Naive thymus-derived CD4-positive, alpha-beta T cell (primary cell): ENCODE measurements at regions of chr19 and their contacts with region 1.

Region 1: DNA sequence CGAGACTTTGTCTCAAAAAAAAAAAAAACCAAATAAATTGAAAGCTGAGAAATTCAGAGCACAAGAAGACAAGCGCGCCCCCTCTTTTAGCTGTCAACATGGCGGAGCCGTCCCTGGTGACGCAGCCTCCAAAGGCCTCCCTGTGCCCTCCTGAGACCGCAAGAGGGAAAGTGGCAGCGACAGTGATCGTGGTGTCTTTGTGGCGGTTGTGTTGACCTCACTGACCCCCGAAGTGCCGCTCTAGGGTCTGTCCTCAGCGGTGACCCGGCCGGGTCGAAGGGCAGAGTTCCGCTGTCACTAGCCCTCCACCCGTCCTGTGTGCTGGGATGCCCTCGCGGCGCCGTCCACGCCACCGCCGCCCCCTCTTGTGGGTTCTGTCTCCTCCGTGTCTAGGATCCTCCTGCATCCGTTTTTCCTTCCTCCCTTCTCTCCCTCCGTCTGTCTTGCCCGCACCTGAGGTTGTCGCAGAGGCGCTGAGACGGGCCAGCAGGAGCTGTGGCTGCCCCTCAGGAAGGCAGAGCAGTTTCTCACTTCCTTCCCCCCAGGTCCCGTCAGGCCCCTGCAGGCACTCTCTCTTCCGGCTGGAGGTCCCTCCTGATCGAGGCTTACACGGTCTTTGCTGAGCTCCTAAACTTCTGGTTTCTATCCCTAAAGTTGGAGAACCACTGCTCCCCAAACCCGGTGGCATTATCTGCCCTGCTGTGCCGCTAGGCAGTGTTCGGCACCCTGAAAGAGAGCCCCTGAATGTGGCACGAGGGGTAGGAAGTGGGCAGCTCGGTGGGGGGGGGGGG is 7.2 kb downstream of the UHRF1 start:
- DNase-seq: peak in 8 of 9 donors; percentile 34 to 66 (median 60)
- ATAC-seq: peak; percentile 47
- H3K4me3 ChIP-seq: peak overlapping the region; percentile 80
- H3K4me3 Mint-ChIP-seq: peak overlapping the region; percentile 96 to 100 (median 99)
- H3K27ac ChIP-seq: peak overlapping the region; percentile 93
- H3K27ac Mint-ChIP-seq: peak overlapping the region; percentile 97 to 100 (median 99)
- H3K4me1 ChIP-seq: peaks cover 29 to 34% of the 10 kb centered on the region in 2 donors
- H3K4me1 Mint-ChIP-seq: peaks cover 26 to 59% (median 39%) of the 10 kb centered on the region in 7 donors
- H3K27me3 ChIP-seq: no peaks in the 10 kb centered on the region
- H3K27me3 Mint-ChIP-seq: no peaks in the 10 kb centered on the region

Region 2: DNA sequence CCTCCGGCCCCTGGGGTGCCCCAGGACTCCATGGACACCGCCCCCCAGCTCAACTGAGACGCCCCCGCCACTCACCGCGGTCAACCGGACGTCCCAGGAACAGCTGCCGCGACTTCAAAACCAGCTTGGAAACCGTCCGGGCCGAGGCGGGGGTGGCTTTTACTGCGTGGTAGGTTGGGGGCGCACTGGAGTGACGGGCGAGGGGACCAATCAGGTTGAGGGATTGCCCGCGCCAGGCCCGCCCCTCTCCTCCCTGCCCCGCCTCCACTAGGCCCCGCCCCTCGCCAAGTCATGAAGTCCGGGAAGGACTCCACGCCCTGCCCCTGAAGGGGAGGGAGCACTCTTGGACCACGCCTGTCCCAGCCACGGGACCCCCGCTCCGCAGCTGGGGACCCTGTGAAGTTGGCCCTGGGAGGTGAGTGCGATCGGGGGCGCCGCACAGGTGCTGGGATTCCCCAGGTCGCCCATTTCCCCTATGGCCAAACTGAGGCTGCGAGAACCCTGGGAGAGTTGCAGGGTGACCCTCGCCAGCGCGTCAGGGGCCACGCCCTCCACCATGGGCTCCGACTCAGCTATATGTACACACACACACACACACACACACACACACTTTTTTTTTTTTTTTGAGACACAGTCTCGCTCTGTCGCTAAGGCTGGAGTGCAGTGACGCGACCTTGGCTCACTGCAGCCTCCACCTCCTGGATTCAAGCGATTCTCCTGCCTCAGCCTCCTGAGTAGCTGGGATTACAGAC is 48.8 kb before region 1 on chr19 and contains the start of gene PLIN3:
- CTCF ChIA-PET with region 1: interaction called, 51 read pairs
- POLR2A ChIA-PET with region 1: interaction called, 14 read pairs
- intact Hi-C with region 1: loop called (anchors 1 kb)
- DNase-seq: peak; percentile 61 to 96 (median 79)
- ATAC-seq: peak; percentile 96
- H3K4me3 ChIP-seq: peak within 1 kb of the TSS; percentile 76
- H3K4me3 Mint-ChIP-seq: peak within 1 kb of the TSS; percentile 76 to 88 (median 84)
- H3K27ac ChIP-seq: peak within 1 kb of the TSS; percentile 70
- H3K27ac Mint-ChIP-seq: peak within 1 kb of the TSS; percentile 68 to 86 (median 75)
- H3K4me1 ChIP-seq: peaks cover 4 to 6% of the 10 kb centered on the region in 2 donors
- H3K4me1 Mint-ChIP-seq: peaks cover 5 to 25% (median 10%) of the 10 kb centered on the region in 7 donors
- H3K27me3 ChIP-seq: no peaks in the 10 kb centered on the region
- H3K27me3 Mint-ChIP-seq: no peaks in the 10 kb centered on the region
- total RNA-seq, gene PLIN3: 12.8 to 38.2 (median 32.0) TPM